Left ventricle myocardium superior (tissue), 1 donor: ENCODE measurements at regions of chr4 and their contacts with region 1.

Region 1: DNA sequence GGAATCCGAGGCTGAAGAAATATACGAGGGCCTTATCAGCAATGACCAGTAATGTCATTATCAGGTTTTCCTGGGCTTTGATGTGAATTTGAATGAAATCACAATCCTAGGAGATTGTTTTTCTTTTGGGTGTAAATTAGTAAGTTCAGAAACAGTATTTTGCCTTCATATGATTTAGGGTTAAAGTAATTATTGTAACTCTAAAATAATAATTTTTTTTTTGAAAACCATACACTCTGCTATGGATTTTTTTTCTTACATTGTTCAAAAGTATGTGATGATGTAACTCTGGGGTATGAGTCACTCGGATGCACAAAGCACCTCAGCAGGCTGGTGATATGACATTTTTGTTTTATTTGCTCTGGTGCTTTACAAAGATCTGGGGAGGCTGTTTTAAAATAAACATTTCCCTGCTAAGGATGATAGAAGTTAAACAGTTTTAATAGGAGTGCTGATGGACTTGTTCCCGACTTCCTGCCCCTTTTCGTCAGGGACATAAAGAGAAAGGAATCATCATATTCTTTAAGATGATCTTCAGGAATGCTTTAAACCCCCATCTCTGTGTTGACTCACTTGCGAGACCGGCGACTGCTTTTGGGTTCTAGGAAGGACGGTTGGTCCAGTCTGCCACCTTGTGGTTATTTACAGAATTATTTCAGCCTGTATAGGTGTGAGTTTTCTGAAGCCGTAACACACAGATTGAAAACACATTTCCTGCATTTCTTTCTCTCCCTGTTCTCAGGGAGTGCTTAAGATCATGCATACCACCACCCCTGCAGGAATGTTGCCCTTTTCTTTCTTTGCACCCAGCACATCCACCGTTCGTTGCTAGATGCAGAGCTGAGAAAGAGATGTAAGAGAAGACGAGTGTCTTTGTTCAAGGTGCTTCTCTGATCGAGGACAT is 72.5 kb downstream of the RAPGEF2 start:
- DNase-seq: no peak
- ATAC-seq: peak; percentile 89

Region 2: GRCh38 chr4:157832596-157832995 is 1342.7 kb before region 1 on chr4:
- intact Hi-C with region 1: no loop called
- DNase-seq: no peak
- ATAC-seq: no peak

Region 3: GRCh38 chr4:158729716-158730559 is 445.4 kb before region 1 on chr4:
- intact Hi-C with region 1: loop called (anchors 10 kb)
- DNase-seq: peak; percentile 52
- ATAC-seq: peak; percentile 94

Region 4: DNA sequence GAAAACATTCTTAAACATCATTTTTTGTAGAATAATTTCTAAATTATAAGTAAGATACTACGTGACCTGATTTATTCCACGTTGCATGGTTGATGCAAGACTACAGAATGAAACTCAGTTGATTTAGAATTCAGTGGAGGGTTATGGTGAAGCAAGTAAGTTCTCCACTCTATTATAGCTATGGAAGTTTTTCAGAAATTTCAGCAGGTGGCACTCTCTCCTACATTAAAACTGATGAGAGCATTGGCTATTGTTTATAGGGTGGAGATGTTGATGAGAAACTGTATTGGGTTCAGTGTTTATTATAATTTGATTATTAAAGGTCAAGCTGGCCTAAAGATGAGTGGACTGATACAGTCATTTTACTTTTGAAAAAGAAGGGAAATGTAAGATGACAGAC is 318.5 kb before region 1 on chr4:
- intact Hi-C with region 1: loop called (anchors 10 kb)
- DNase-seq: no peak
- ATAC-seq: peak; percentile 60

Region 5: GRCh38 chr4:159016593-159017024 is 158.7 kb before region 1 on chr4:
- intact Hi-C with region 1: loop called (anchors 10 kb)
- DNase-seq: no peak
- ATAC-seq: no peak

Region 6: DNA sequence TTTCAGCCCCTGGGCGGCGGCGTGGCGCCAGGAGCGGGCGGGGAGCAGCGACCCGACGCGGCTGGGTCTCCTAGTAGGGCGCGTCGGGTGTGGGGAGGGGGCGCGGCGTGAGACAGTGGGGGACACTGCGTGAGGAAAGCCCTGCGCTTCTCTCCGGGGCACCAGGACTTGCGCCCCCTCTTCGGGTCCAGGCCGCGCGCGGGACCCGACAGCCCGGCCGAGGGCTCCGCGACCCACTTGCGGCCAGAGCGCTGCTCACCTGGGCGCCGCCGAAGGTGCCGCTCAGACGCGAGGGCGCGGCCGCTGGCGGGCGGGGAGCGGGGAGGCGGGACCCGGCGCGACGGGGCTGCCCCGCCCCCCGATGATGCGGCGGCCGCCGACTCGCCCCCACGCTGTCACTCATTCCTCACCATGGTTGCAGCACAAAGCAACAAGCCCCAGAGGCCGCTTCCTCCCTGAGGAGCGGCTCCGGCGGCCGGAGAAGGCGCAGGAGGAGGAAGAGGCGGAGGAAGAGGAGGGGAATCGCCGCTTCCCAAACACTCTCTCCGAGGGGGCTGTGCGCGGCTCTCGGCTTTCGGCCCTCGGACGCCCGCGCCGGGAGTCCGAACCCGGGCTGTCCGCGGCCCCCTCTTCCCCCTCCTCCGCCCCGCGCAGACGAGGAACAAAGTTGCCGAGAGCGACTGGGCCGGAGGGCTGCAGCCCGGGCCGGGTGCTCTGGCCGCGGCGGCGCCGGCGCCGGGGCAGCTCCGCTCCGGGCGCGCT is 72.5 kb before region 1 on chr4 and contains the start of gene RAPGEF2:
- intact Hi-C with region 1: loop called (anchors 10 kb)
- DNase-seq: peak; percentile 94
- ATAC-seq: peak; percentile 94
- total RNA-seq, gene RAPGEF2: 42.2 TPM

Region 7: DNA sequence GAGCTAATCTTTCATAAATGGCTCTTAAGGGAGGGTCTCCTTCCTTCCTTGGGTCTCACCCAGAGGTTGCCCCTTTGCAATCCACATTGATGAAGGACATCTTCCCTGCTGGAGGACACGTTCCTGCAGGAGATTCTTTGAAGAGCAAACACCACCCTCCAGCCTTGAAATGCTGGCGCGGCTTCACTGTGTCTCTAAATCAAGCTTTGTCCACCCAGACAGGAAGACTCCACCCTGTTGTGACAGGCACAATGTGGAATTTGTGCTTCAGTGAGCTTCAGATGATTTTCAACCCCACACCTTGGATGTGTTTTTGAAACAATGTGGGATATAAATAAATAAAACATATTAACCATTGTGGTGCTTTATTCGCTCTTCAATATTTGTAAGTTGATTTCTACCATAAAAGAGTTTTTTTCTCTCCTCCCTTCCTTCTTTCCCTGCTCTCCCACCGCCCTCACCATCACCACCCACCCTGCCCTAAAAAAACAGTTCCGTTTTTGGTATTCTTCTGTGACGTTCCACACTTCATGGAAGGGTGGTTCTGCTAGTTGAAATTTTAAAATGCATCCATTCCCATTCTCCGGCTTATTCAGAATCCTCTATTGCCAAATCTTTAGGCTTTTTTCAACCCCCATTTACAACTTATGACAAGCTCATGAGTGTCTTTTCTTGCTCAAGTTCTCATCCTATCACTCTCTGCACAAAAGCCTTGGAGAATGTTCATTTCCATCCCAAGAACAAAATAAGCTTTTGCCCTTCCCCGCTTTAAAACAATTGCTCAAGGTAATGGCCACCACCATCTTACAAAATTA is 191.8 kb after region 1 on chr4:
- intact Hi-C with region 1: no loop called
- DNase-seq: no peak
- ATAC-seq: peak; percentile 61